B cell (primary cell): ENCODE measurements at regions of chr1 and their contacts with region 1.

Region 1: GRCh38 chr1:93304716-93305138 is 41.0 kb upstream of the DR1 start:
- DNase-seq: peak; percentile 73
- ATAC-seq: peak; percentile 53
- H3K4me3 ChIP-seq: no peak overlapping the region
- H3K4me3 Mint-ChIP-seq: no peak overlapping the region
- H3K27ac ChIP-seq: no peak overlapping the region
- H3K27ac Mint-ChIP-seq: no peak overlapping the region
- H3K4me1 ChIP-seq: no peaks in the 10 kb centered on the region
- H3K4me1 Mint-ChIP-seq: no peaks in the 10 kb centered on the region
- H3K27me3 ChIP-seq: no peaks in the 10 kb centered on the region
- H3K27me3 Mint-ChIP-seq: no peaks in the 10 kb centered on the region
- CTCF ChIP-seq: peak; percentile 88

Region 2: GRCh38 chr1:93317207-93317606 is 12.5 kb after region 1 on chr1:
- CTCF ChIA-PET with region 1: interaction called, 14 read pairs
- POLR2A ChIA-PET with region 1: no interaction called
- intact Hi-C with region 1: no loop called
- DNase-seq: no peak
- ATAC-seq: no peak
- H3K4me3 ChIP-seq: no peak overlapping the region
- H3K4me3 Mint-ChIP-seq: no peak overlapping the region
- H3K27ac ChIP-seq: no peak overlapping the region
- H3K27ac Mint-ChIP-seq: no peak overlapping the region
- H3K4me1 ChIP-seq: no peaks in the 10 kb centered on the region
- H3K4me1 Mint-ChIP-seq: no peaks in the 10 kb centered on the region
- H3K27me3 ChIP-seq: no peaks in the 10 kb centered on the region
- H3K27me3 Mint-ChIP-seq: no peaks in the 10 kb centered on the region
- CTCF ChIP-seq: no peak

Region 3: DNA sequence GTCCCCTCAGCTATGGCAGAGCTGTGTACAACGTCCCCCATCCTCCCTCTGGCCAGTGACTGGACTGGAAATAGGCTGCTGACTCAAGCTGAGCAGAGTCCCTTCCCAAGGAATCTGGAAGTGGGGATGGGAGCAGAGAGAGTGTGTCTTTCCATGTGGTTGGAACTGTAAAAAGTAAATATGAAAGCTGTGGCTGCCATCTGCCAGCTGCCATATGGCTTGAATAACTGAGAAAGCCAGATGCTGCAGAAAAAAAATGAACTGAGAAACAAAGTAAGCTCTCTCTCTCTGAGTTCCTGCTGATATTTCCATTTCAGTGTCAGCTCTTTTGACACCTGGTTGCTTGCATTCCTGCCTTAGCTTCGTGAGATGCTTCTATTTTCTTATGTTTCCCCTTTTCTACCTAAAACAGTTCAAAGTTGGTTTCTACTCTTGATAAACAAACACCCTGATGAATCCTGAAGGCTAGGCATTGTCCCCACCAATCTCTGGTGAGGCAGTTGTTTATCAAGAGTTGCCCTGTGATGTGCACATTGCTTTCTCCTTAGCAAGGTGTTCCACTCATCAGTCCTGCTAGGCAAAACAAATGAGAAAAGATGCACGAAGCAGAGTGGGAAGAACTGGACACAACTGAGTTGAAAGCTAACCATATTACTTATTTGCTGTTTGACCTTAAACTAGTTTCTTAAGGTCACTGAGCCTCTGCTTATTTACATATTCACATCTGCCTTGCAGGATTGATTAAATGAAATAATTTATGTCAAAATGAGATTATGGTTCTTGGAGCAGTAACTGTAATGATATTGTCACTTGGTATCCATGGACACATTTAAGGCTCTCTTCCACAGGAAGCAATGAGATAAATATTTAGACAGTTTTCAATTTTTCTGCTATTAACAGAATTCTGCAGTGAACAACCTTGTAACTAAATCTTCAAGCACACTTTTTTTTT is 24.4 kb after region 1 on chr1:
- CTCF ChIA-PET with region 1: interaction called, 11 read pairs
- POLR2A ChIA-PET with region 1: no interaction called
- intact Hi-C with region 1: no loop called
- DNase-seq: no peak
- ATAC-seq: no peak
- H3K4me3 ChIP-seq: no peak overlapping the region
- H3K4me3 Mint-ChIP-seq: no peak overlapping the region
- H3K27ac ChIP-seq: no peak overlapping the region
- H3K27ac Mint-ChIP-seq: no peak overlapping the region
- H3K4me1 ChIP-seq: no peaks in the 10 kb centered on the region
- H3K4me1 Mint-ChIP-seq: no peaks in the 10 kb centered on the region
- H3K27me3 ChIP-seq: no peaks in the 10 kb centered on the region
- H3K27me3 Mint-ChIP-seq: no peaks in the 10 kb centered on the region
- CTCF ChIP-seq: no peak